Panc1 (cell line): ENCODE measurements at regions of chr2 and their contacts with region 1.

Region 1: DNA sequence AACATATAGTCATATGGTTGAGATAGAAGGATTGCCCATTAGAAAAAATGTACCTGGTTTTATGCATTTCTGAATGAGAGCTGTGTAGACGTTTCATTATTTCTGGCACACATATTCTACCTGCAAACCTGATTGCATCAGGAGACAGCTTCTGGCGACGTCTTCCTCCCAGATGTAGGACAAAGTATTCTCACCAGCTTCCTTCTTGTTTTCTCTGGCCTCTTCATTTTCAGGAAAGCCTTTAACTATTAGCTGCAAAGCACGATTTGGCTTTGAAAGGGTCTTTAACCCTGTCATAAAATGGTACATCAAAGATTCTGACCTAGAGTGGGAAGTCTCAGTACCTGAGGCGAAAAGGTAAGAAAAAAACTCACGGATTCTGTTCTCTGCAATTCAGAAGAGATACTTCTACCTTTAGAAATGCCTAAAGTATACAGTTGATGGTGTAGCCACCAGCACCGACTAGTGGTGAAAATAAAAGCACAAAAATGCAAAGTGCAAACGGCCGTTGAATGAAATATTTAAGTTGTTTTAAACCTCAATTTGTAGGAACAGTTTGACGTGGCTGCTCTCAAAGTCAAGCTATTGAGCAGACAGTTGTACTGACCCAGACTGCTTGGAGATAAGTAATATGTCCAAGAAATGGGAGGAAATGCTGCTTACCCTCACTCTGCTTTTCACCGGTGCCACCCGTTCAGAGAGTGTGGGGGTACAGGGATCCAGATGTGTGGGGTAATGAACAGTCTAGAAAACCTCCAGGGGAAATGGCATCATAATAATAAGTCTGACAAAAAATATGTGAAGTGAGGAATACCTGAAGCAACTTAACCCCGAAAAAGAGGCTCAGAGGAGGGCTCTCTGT is 20.2 kb downstream of the IL18RAP start:
- DNase-seq: peak; percentile 17
- ATAC-seq: no peak
- H3K4me3 ChIP-seq: no peak overlapping the region
- H3K27ac ChIP-seq: no peak overlapping the region
- H3K4me1 ChIP-seq: no peaks in the 10 kb centered on the region
- H3K27me3 ChIP-seq: peaks cover 3% of the 10 kb centered on the region; the same call in 1 of the 2 replicates
- CTCF ChIP-seq: peak; percentile 82

Region 2: DNA sequence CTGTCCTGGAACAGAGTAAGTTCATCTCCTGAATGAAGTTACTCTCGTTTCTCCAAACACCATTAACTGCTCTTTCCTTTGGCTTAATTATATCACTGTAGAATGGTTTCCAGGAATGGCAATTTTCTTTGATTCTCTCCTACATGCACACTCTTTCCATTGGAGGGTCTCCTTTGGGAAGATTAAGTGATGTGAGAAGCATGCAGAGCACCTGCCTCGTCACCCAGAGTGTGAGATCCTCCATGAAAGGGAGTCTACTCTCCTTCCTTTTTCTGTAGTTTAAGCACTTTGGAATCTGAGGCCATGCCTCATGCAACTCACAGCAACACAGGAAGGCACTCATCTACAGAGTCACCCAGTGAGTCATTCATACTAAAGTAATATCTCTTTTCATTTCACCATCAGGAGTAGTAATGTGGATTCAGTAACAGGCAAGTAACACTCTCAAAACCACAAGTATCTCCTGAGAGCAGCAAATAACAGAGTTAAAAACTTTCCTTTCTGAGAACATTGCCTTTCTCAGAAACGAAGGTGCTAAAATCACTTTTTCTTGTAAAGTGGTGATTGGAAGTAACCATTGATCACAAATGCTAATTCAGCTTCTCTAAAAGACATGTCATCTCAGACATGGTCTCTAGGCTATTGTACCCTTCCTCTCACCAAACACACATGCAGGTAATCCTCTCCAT is 184.7 kb before region 1 on chr2:
- CTCF ChIA-PET with region 1: no interaction called
- POLR2A ChIA-PET with region 1: no interaction called
- in situ Hi-C with region 1: no loop called
- intact Hi-C with region 1: loop called (anchors 5 kb)
- DNase-seq: peak; percentile 74
- ATAC-seq: no peak
- H3K4me3 ChIP-seq: no peak overlapping the region
- H3K27ac ChIP-seq: no peak overlapping the region
- H3K4me1 ChIP-seq: no peaks in the 10 kb centered on the region
- H3K27me3 ChIP-seq: peaks cover 2% of the 10 kb centered on the region
- CTCF ChIP-seq: no peak

Region 3: GRCh38 chr2:102463160-102463559 is 20.0 kb after region 1 on chr2:
- CTCF ChIA-PET with region 1: no interaction called
- POLR2A ChIA-PET with region 1: no interaction called
- in situ Hi-C with region 1: no loop called
- intact Hi-C with region 1: no loop called
- DNase-seq: no peak
- ATAC-seq: no peak
- H3K4me3 ChIP-seq: no peak overlapping the region
- H3K27ac ChIP-seq: no peak overlapping the region
- H3K4me1 ChIP-seq: no peaks in the 10 kb centered on the region
- H3K27me3 ChIP-seq: no peaks in the 10 kb centered on the region; the same call in 1 of the 2 replicates
- CTCF ChIP-seq: no peak